Activated T-helper 1 cell treated with anti-CD3 and anti-CD28 coated beads, Interleukin-12 subunit alpha, Interleukin-12 subunit beta, Interleukin-2, Interleukin-4 antibody, amounts not matched to agents 30 ng/mL and 10 ng/mL and 1 ng/mL, durations not matched to agents 14 hours and 24 hours and 36 hours (primary cell): ENCODE measurements at regions of chr1 and their contacts with region 1.

Region 1: DNA sequence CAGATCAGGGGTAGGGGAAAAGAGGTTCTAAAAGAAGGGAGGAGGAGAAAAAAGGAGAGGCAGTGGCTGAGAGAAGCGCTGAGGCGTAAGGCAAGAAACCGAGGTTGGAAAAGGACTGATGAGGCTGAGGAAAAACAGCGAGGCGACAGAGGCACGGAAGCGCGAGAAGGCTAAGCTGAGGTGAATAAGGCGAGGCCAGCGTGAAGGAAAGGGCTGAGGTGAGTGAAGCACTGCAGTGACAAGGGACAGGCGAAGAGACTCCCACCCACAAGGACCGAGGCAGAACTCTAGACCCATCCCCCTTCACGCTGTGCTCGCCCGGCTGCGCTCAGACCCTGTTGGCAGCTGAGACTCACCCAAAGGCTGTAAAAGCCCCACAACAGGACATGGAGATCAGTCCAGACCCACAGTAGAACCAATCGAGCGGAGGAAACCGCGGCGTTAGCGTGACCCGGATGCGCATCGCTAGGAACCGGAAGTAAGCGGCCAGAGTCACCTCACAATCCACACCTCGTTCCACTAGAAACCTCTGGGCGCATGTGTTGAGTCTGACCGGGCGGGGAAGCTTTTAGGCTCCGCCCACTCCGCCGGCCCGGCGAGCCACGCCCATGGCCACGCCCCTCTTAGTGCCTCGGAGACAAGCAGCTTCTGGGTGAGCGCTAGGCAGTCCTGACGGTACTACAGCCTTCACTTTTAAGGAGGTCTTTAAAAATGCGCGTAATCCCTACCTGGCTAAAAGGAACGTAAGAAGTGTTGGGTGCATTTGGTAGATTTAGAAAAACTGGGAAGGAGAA is at the start of gene EYA3:
- DNase-seq: peak; percentile 100
- H3K4me3 Mint-ChIP-seq: peak within 1 kb of the TSS; percentile 99
- H3K27ac Mint-ChIP-seq: peak within 1 kb of the TSS; percentile 95
- H3K4me1 Mint-ChIP-seq: peaks cover 35% of the 10 kb centered on the region
- H3K27me3 Mint-ChIP-seq: peaks cover 5% of the 10 kb centered on the region
- total RNA-seq, gene EYA3: 32.2 and 35.5 TPM in 2 replicates

Region 2: DNA sequence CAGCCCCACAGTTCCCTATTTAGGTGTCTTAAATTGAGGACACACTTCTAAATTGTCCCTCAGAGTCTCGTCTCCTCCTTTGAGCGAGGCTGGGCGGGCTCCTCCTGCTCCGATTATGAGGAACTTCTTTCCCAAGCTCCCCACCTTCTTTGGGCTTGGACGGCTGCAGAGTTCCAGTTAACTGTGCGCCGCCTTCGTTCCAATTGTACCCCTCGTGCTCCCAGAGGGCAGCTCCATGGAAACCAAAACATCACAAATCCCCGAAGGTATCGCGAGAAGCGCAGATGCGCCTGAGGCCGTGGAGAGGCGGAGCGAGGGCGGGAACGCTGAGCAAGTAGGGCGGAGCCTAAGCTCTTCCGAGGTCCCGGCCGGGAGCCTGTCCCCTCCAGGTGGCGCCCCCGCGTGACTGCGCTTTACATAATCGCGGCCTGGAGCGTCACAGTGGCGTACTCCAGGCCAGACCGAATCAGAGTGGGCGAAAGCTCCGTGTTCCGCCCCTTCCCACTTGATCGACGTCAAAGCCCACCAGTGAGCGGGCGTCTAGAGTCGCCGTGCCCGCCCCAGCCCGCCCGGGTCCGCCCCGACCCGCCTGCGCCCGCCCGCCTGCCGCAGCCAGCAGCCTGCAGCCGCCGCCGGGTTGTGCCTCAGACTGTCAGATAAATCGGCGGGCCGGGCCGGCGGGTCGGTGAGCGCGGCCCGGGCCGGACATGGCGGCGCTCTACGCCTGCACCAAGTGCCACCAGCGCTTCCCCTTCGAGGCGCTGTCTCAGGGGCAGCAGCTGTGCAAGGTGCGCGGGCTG is 362.8 kb before region 1 on chr1 and contains the start of gene FAM76A:
- intact Hi-C with region 1: loop called (anchors 1 kb)
- DNase-seq: peak; percentile 99
- H3K4me3 Mint-ChIP-seq: peak within 1 kb of the TSS; percentile 86
- H3K27ac Mint-ChIP-seq: peak within 1 kb of the TSS; percentile 97
- H3K4me1 Mint-ChIP-seq: peaks cover 29% of the 10 kb centered on the region
- H3K27me3 Mint-ChIP-seq: no peaks in the 10 kb centered on the region
- total RNA-seq, gene FAM76A: 9.9 and 13.1 TPM in 2 replicates

Region 3: DNA sequence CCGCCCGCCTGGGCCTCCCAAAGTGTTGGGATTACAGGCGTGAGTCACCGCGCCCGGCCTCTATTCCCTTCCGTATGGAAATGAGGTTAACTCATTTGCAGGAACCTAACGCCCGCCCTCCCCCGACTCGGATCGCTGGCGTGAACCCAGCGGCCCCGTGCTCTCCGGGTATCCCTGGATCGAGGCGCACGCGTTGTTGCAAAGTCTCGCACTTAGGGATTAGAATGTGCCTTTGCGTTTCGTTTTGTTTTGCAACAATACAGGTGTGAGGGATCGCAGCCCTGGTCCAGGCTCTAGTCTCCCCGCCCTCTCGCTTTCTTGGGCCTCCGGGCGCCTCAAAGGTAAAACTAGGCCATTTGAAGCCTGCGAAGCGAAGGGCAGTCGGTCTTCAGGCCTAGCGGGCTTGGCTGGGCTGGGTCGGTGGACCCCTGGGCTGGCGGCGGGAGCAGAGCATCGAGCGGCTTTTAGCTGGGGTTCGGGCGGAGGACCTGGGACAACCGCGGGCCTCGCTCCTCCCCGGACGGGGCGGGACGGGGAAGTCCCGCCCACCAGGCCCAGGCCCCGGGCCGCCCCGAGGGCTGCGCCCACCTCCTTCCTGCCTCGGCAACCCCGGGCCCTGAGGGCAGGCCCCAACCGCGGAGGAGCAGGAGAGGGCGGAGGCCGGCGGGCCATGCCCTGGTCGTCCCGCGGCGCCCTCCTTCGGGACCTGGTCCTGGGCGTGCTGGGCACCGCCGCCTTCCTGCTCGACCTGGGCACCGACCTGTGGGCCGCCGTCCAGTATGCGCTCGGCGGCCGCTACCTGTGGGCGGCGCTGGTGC is 128.8 kb before region 1 on chr1 and contains the start of gene XKR8:
- intact Hi-C with region 1: loop called (anchors 1 kb)
- DNase-seq: peak; percentile 84
- H3K4me3 Mint-ChIP-seq: peak within 1 kb of the TSS; percentile 87
- H3K27ac Mint-ChIP-seq: peak within 1 kb of the TSS; percentile 74
- H3K4me1 Mint-ChIP-seq: peaks cover 15% of the 10 kb centered on the region
- H3K27me3 Mint-ChIP-seq: no peaks in the 10 kb centered on the region
- total RNA-seq, gene XKR8: 5.7 and 5.8 TPM in 2 replicates

Region 4: GRCh38 chr1:28112388-28113241 is 24.2 kb after region 1 on chr1:
- intact Hi-C with region 1: loop called (anchors 2 kb)
- DNase-seq: no peak
- H3K4me3 Mint-ChIP-seq: no peak overlapping the region
- H3K27ac Mint-ChIP-seq: no peak overlapping the region
- H3K4me1 Mint-ChIP-seq: peaks cover 37% of the 10 kb centered on the region
- H3K27me3 Mint-ChIP-seq: peaks cover 11% of the 10 kb centered on the region

Region 5: GRCh38 chr1:28199328-28200233 is 111.2 kb after region 1 on chr1:
- intact Hi-C with region 1: loop called (anchors 1 kb)
- DNase-seq: peak; percentile 79
- H3K4me3 Mint-ChIP-seq: peak overlapping the region; percentile 78
- H3K27ac Mint-ChIP-seq: peak overlapping the region; percentile 93
- H3K4me1 Mint-ChIP-seq: peaks cover 53% of the 10 kb centered on the region
- H3K27me3 Mint-ChIP-seq: no peaks in the 10 kb centered on the region

Region 6: GRCh38 chr1:28329395-28330153 is 241.2 kb after region 1 on chr1:
- intact Hi-C with region 1: loop called (anchors 5 kb)
- DNase-seq: no peak
- H3K4me3 Mint-ChIP-seq: peak overlapping the region; percentile 96
- H3K27ac Mint-ChIP-seq: peak overlapping the region; percentile 98
- H3K4me1 Mint-ChIP-seq: peaks cover 31% of the 10 kb centered on the region
- H3K27me3 Mint-ChIP-seq: no peaks in the 10 kb centered on the region